ENCODE measurements at regions of chr11 and their contacts with region 1.

Region 1: GRCh38 chr11:46392421-46393230 is 1.1 kb upstream of the CHRM4 start:
- DNase-seq: no peak
- ATAC-seq: peak; percentile 85
- H3K4me3 ChIP-seq: peak overlapping the region; percentile 57; the same call in 1 of the 2 replicates
- H3K27ac ChIP-seq: no peak overlapping the region
- H3K4me1 ChIP-seq: peaks cover 6% of the 10 kb centered on the region
- H3K27me3 ChIP-seq: peaks cover 12 to 13% of the 10 kb centered on the region in 2 experiments
- CTCF ChIP-seq: no peak
- EP300 ChIP-seq: no peak
- POLR2A ChIP-seq: no peak
- RAD21 ChIP-seq: no peak

Region 2: DNA sequence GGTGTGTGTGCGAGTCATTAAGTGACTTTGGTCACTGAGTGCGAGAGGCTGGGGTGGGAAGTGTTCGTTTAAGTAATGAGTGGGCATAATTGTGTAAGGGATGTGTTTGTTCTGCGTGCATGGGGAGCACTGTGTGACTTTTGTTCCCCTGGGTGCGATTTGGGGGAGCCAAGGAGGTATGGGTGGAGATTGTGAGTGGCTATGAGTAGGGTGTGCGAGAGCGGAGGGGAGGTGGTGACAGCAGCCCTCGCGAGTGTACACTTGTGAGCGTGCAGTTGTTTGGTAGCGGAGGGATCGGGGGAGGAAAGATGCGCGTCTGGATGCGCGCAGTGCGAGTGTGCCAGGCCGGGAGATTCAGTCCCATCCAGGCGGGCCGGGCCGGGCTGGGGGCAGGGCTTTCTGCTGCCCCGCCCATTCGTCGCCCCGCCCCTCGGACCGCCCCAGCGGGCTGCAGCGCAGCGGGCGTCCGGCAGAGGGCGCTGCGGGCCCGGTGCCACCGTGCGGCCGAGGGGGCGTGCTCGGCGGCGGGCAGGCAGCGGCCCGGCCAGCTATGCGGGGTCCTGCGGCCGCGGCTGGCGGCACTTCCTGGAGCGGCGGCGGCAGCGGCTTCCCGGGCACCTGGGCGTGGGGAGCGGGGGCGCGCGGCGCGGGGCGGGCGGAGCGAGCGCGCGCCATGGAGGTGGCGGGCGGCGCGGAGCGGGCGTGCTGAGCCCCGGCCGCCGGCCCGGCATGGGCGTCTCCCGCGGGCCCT is 45.6 kb before region 1 on chr11 and contains the start of gene DGKZ:
- CTCF ChIA-PET with region 1: interaction called, 18 read pairs
- POLR2A ChIA-PET with region 1: no interaction called
- RAD21 ChIA-PET with region 1: interaction called, 13 read pairs
- SMC1A ChIA-PET with region 1: interaction called, 6 read pairs
- in situ Hi-C with region 1: no loop called
- intact Hi-C with region 1: no loop called
- DNase-seq: no peak
- ATAC-seq: peak; percentile 69
- H3K4me3 ChIP-seq: peak within 1 kb of the TSS; percentile 88
- H3K27ac ChIP-seq: peak within 1 kb of the TSS; percentile 71
- H3K4me1 ChIP-seq: peaks cover 39% of the 10 kb centered on the region
- H3K27me3 ChIP-seq: no peaks in the 10 kb centered on the region
- CTCF ChIP-seq: peak; percentile 63 to 92 (median 64); a peak in 4 of 6 replicates
- EP300 ChIP-seq: no peak
- POLR2A ChIP-seq: no peak; the same call in 1 of the 2 replicates
- RAD21 ChIP-seq: peak; percentile 64
- polyA plus RNA-seq, gene DGKZ: 0.50 to 1.6 TPM

Region 3: DNA sequence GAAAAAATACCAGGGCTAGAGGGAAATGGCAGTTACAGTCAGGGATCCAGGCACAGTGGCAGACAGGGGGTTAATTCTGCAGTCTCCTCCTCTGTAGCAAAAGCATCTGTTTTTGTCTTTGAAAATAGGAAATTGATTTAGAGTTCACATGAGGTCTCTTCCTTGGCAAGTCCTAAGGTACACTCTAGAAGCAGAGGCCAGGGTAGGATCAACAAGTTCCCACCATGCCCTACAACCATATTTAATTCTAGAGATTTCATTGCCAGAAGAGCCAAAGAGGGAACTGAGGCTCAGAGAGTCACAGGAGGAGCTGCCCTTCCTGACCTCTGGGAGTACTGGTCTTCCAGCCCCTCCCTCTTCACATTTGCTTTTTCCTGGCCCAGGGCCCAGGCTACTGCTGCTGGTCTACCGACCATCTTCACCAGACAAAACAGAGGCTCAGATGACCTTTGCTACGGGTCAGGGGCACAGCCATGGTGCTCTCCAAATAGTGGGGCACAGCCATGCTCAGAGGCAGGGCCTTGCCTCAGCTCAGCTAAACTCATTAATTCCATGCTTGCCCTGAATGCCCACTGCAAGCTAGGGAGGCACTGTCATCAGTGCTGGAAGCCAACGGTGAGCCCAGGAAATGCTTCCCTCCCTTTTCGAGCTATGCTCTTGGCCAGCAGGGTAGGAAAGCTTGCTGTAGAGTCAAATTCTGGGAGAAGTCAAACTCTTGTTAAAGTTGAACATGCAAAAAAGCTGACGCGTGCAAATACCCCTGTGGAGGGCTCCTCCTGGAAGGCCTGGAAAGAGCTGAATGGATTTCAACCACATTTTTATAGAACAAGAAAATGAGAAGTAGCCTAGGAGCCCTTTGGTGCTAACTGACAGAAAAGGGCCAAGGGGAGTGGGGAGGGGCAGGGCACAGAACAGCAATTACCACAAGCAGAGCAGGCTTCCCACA is 10.6 kb after region 1 on chr11:
- CTCF ChIA-PET with region 1: interaction called, 13 read pairs
- POLR2A ChIA-PET with region 1: no interaction called
- RAD21 ChIA-PET with region 1: no interaction called
- SMC1A ChIA-PET with region 1: interaction called, 3 read pairs
- in situ Hi-C with region 1: no loop called
- intact Hi-C with region 1: no loop called
- DNase-seq: no peak
- ATAC-seq: no peak
- H3K4me3 ChIP-seq: no peak overlapping the region
- H3K27ac ChIP-seq: no peak overlapping the region
- H3K4me1 ChIP-seq: no peaks in the 10 kb centered on the region
- H3K27me3 ChIP-seq: no peaks in the 10 kb centered on the region
- CTCF ChIP-seq: no peak
- EP300 ChIP-seq: no peak
- POLR2A ChIP-seq: no peak
- RAD21 ChIP-seq: no peak

Region 4: GRCh38 chr11:46484101-46484500 is 91.5 kb after region 1 on chr11:
- CTCF ChIA-PET with region 1: interaction called, 20 read pairs
- POLR2A ChIA-PET with region 1: interaction called, 6 read pairs
- RAD21 ChIA-PET with region 1: interaction called, 12 read pairs
- SMC1A ChIA-PET with region 1: interaction called, 13 read pairs
- in situ Hi-C with region 1: no loop called
- intact Hi-C with region 1: no loop called
- DNase-seq: no peak
- ATAC-seq: no peak
- H3K4me3 ChIP-seq: no peak overlapping the region
- H3K27ac ChIP-seq: peak overlapping the region; percentile 41
- H3K4me1 ChIP-seq: peaks cover 3% of the 10 kb centered on the region
- H3K27me3 ChIP-seq: no peaks in the 10 kb centered on the region
- CTCF ChIP-seq: no peak
- EP300 ChIP-seq: no peak
- POLR2A ChIP-seq: no peak
- RAD21 ChIP-seq: no peak

Region 5: DNA sequence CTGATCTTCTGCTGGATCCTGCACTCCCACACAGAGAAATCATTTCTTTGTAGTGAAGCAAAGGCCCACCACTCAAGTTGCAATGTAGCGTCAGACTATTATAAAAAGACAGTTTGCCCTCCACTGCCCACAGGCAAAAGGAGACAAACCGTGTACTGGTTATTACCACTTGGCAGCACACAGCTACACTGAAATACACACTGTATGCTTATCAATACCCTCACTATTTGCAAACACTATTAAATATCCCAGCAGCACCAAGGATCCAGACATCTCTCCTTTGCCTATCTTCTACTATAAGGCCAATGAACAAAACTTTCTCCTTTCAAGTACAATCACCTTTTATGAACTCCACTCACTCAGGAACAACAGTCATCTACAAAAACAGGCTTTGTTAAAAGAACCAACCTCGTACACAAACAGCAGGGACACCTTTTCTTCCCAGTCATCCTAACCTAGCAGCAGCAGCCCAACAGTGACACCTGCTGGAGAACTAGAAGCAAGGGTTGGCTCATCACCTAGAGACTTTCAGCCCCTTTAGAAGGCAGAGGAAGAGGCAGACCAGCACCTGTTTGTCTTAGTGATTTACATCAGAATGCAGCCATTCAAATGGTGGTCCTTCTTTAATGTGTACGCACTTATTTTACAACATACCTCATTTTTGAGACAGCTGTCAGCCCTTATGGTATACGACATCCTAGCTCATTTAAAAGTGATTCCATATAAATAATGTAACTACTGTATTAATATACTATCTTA is 145.1 kb after region 1 on chr11:
- CTCF ChIA-PET with region 1: interaction called, 94 read pairs
- POLR2A ChIA-PET with region 1: interaction called, 3 read pairs
- RAD21 ChIA-PET with region 1: interaction called, 8 read pairs
- SMC1A ChIA-PET with region 1: interaction called, 7 read pairs
- in situ Hi-C with region 1: loop called (anchors 10 kb)
- intact Hi-C with region 1: loop called (anchors 1 kb)
- DNase-seq: no peak
- ATAC-seq: peak; percentile 99
- H3K4me3 ChIP-seq: no peak overlapping the region
- H3K27ac ChIP-seq: no peak overlapping the region
- H3K4me1 ChIP-seq: no peaks in the 10 kb centered on the region
- H3K27me3 ChIP-seq: no peaks in the 10 kb centered on the region
- CTCF ChIP-seq: peak; percentile 90 to 95 (median 93); a peak in 5 of 6 replicates
- EP300 ChIP-seq: no peak
- POLR2A ChIP-seq: no peak
- RAD21 ChIP-seq: peak; percentile 95